A549 (cell line): ENCODE measurements at regions of chr15 and their contacts with region 1.

Region 1: DNA sequence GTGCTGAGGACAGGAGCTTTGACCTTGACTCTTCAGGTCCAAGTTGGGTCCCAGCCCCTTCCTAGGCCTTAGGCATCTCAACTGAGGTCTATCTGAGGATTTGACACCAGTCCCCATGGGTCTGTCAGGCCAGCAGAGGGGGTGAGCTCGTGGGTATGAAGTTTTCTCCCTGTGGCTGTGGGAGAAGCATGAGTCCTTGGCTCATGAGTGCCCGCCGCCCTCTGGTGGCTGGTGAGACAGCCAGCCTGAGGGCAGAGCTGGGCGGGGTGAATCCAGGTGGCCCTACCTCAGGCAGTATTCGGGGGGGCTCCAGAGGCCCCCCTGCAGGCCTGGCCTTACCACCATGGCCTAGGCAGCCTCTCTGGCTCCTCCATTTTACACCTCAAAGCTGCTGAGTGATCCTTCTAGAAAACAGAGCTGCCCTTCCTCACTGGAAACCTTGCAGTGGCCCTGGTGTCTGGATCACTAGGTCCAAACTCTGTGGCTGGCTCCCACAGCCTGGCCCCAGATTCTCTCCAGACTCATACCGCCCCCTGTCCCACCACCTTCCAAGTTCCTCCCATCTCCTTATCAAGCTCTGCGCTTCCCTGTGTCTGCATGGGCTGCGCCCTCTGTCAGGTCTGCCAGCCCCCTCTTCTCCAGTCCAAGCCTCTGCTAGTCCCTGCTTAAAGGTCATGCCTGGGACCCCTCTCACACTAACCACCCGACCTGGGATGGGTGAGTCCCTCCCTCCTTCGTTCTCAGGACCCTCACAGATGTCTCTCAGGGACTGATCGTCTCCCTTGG is 16.1 kb downstream of the SH2D7 start:
- DNase-seq: peak; percentile 89 to 98
- ATAC-seq: peak; percentile 85 to 96
- H3K4me3 ChIP-seq: no peak overlapping the region
- H3K27ac ChIP-seq: no peak overlapping the region
- H3K4me1 ChIP-seq: no peaks in the 10 kb centered on the region
- CTCF ChIP-seq: peak; percentile 99
- EP300 ChIP-seq: no peak
- POLR2A ChIP-seq: no peak
- RAD21 ChIP-seq: peak; percentile 92 to 95

Region 2: DNA sequence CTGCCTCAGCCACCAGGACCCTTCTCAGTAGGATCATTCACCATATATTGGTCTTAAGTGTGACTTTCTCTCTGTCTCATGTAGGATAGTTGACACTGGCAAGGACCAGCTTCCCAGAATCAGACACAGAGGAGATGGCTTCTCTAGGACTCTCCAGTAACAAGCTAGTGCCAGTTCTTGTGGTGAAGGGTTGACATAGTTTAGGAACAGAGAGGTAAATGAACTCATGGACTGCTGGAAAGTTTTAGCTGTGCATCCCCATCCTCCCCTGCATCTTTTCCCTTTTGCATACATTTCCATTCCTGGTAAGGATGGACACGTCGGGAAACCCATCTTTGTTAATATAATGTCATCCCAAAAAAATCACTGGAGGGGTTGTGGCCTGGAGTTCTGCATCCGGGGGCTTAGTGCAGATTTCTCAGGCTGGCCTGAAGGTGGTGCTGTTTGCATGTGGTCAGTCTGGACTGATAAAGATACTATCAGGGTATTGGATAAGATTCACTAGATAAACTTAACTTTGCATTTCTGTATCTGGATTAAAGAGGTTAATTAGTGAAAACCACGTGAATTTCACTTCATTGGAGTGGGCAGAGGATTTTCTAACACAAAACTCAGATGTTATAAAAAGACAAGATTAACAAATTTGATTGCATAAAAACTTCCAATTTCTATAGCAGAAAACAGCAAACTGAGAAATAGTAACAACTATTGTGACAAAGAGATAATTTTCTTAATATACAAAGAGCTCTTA is 141.8 kb before region 1 on chr15:
- CTCF ChIA-PET with region 1: interaction called, 246 read pairs
- POLR2A ChIA-PET with region 1: no interaction called
- DNase-seq: peak; percentile 65 to 92
- ATAC-seq: peak; percentile 92 to 99
- H3K4me3 ChIP-seq: no peak overlapping the region
- H3K27ac ChIP-seq: no peak overlapping the region
- H3K4me1 ChIP-seq: no peaks in the 10 kb centered on the region
- CTCF ChIP-seq: peak; percentile 94
- EP300 ChIP-seq: no peak
- POLR2A ChIP-seq: no peak
- RAD21 ChIP-seq: peak; percentile 92 to 94

Region 3: GRCh38 chr15:78059110-78059844 is 49.2 kb before region 1 on chr15:
- CTCF ChIA-PET with region 1: interaction called, 13 read pairs
- POLR2A ChIA-PET with region 1: no interaction called
- DNase-seq: no peak
- ATAC-seq: no peak
- H3K4me3 ChIP-seq: no peak overlapping the region
- H3K27ac ChIP-seq: peak overlapping the region in 1 of 2 experiments; percentile 57; a peak in 4 of 6 replicates
- H3K4me1 ChIP-seq: peaks cover 44% of the 10 kb centered on the region
- CTCF ChIP-seq: no peak
- EP300 ChIP-seq: no peak
- POLR2A ChIP-seq: no peak
- RAD21 ChIP-seq: no peak

Region 4: DNA sequence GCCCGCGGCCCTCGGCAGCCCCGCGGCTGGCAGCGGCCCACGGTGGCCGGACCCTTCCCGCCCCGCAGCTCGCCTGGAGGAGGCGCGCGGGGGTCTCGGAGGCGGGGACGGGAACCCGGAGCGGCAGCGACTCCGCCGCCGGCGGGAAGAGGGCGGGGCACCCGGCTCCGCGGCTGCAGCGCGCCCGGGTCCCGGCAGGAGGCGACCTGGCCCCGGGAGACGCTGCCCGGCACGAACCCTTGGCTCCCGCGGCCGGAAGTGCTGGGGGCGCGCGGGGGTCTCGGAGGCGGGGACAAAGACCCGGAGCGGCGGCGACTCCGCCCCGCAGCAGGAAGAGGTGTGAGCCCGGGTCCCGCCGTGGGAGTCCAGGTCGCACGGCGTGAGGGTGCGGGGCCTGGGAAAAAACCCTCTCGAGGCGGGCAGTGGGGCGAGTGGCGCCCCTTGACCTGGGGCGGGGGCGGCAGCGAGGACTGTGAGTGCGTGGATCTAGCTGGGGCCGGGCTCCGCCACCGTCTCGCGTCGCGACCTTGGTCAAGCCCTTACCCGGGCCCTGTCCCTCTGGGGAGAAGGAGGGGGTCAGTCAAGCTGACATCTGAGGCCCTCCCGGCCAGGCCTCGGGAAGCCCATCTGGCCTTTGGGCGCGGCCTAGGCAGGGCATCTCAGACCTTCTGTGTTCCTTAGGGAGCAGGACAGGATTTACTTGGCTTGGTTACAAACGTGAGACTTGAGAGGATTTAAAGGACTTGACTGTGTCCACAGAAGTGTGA is 23.0 kb after region 1 on chr15 and contains the start of gene CIB2:
- CTCF ChIA-PET with region 1: interaction called, 44 read pairs
- POLR2A ChIA-PET with region 1: interaction called, 3 read pairs
- DNase-seq: peak; percentile 71 to 92
- ATAC-seq: peak; percentile 84 to 87
- H3K4me3 ChIP-seq: peak within 1 kb of the TSS; percentile 86
- H3K27ac ChIP-seq: peak within 1 kb of the TSS; percentile 91 to 94
- H3K4me1 ChIP-seq: peaks cover 38% of the 10 kb centered on the region
- CTCF ChIP-seq: peak; percentile 85
- EP300 ChIP-seq: no peak
- POLR2A ChIP-seq: peak; percentile 74
- RAD21 ChIP-seq: peak; percentile 61 to 81
- polyA plus RNA-seq, gene CIB2: 16.4 and 21.2 TPM in 2 replicates

Region 5: DNA sequence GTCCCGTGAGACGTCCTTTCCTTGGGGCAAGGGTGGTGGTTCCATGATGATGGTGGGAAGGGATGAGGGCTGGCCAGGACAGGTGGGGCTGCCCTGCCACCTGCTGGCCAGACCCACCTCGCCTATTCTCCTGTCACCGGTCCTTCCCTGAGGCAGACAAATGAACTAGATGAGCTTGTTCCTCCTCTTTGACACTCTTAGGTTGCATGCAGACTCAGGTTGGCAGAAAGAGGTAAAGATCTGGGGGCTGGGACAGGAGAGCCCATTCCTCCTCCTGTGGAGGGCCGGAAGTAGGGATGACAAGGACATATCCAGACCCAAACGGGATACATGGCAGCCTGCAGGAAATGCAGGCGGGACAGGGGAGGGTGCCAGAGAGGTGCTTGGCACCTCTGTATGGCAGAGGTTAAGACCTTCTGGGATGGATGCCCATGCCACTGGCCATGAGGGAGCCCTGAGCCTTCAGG is 87.3 kb after region 1 on chr15:
- CTCF ChIA-PET with region 1: interaction called, 71 read pairs
- POLR2A ChIA-PET with region 1: interaction called, 4 read pairs
- DNase-seq: peak; percentile 57 to 78
- ATAC-seq: peak; percentile 92 to 96
- H3K4me3 ChIP-seq: no peak overlapping the region
- H3K27ac ChIP-seq: no peak overlapping the region
- H3K4me1 ChIP-seq: no peaks in the 10 kb centered on the region
- CTCF ChIP-seq: peak; percentile 89
- EP300 ChIP-seq: no peak
- POLR2A ChIP-seq: no peak
- RAD21 ChIP-seq: peak; percentile 83 to 87

Region 6: GRCh38 chr15:78241007-78241406 is 132.5 kb after region 1 on chr15:
- CTCF ChIA-PET with region 1: interaction called, 251 read pairs
- POLR2A ChIA-PET with region 1: interaction called, 3 read pairs
- DNase-seq: peak; percentile 83 to 94
- ATAC-seq: peak; percentile 95 to 98
- H3K4me3 ChIP-seq: no peak overlapping the region
- H3K27ac ChIP-seq: no peak overlapping the region
- H3K4me1 ChIP-seq: no peaks in the 10 kb centered on the region
- CTCF ChIP-seq: peak; percentile 94
- EP300 ChIP-seq: no peak
- POLR2A ChIP-seq: no peak
- RAD21 ChIP-seq: peak; percentile 96 to 99